Calu3 (cell line): ENCODE measurements at regions of chr3 and their contacts with region 1.

Region 1: GRCh38 chr3:170739410-170739809 is 130.6 kb downstream of the RPL22L1 start:
- DNase-seq: no peak
- H3K4me3 Mint-ChIP-seq: no peak overlapping the region
- H3K27ac Mint-ChIP-seq: no peak overlapping the region
- H3K4me1 Mint-ChIP-seq: peaks cover 24% of the 10 kb centered on the region
- H3K27me3 Mint-ChIP-seq: peaks cover 8% of the 10 kb centered on the region
- CTCF ChIP-seq: no peak

Region 2: DNA sequence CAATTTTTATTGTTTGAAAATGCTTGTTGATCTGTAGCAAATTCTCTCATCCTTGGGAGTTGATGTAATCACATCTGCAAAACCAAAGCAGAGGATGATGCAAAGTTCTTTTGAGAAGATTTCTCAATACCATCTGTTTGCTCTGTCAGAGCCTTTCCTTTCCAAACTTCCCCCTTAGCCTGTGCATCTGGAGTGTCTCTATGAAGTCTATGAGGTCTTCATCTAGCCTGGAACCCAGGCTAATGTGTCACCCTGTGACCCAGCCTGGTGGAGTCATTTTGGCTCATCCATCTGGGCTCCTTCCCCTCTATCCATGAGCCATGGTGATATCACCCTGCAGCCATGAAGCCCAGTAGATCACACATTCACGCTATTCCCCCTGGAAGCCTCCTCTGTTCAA is 30.4 kb before region 1 on chr3:
- CTCF ChIA-PET with region 1: interaction called, 10 read pairs
- intact Hi-C with region 1: no loop called
- DNase-seq: no peak
- H3K4me3 Mint-ChIP-seq: no peak overlapping the region
- H3K27ac Mint-ChIP-seq: no peak overlapping the region
- H3K4me1 Mint-ChIP-seq: no peaks in the 10 kb centered on the region
- H3K27me3 Mint-ChIP-seq: peaks cover 22% of the 10 kb centered on the region
- CTCF ChIP-seq: no peak